ENCODE measurements at regions of chr19 and their contacts with region 1.

Region 1: DNA sequence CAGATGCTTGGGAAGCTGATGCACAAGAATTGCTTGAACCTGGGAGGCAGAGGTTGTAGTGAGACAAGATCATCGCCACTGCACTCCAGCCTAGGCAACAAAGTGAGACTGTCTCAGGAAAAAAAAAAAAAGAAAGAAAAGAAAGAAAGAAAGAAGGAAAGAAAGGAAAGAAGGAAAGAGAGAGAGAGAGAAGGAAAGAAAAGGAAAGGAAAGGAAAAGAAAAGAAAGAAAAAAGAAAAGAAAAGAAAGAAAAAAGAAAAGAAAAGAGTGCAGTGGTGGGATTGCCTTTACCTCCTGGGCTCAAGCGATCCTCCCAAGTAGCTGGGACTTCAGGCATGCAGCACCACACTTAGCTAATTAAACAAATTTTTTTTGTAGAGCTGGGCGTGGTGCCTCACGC is 12.9 kb downstream of the OLFM2 start:
- DNase-seq: no peak
- H3K4me3 ChIP-seq: no peak overlapping the region
- H3K27ac ChIP-seq: no peak overlapping the region
- H3K4me1 ChIP-seq: no peaks in the 10 kb centered on the region
- H3K27me3 ChIP-seq: no peaks in the 10 kb centered on the region
- CTCF ChIP-seq: no peak

Region 2: GRCh38 chr19:10061717-10062310 is 138.4 kb after region 1 on chr19:
- intact Hi-C with region 1: no loop called
- DNase-seq: peak in 2 of 5 donors; percentile 4 to 27
- H3K4me3 ChIP-seq: no peak overlapping the region
- H3K27ac ChIP-seq: no peak overlapping the region
- H3K4me1 ChIP-seq: no peaks in the 10 kb centered on the region
- H3K27me3 ChIP-seq: no peaks in the 10 kb centered on the region
- CTCF ChIP-seq: no peak

Region 3: DNA sequence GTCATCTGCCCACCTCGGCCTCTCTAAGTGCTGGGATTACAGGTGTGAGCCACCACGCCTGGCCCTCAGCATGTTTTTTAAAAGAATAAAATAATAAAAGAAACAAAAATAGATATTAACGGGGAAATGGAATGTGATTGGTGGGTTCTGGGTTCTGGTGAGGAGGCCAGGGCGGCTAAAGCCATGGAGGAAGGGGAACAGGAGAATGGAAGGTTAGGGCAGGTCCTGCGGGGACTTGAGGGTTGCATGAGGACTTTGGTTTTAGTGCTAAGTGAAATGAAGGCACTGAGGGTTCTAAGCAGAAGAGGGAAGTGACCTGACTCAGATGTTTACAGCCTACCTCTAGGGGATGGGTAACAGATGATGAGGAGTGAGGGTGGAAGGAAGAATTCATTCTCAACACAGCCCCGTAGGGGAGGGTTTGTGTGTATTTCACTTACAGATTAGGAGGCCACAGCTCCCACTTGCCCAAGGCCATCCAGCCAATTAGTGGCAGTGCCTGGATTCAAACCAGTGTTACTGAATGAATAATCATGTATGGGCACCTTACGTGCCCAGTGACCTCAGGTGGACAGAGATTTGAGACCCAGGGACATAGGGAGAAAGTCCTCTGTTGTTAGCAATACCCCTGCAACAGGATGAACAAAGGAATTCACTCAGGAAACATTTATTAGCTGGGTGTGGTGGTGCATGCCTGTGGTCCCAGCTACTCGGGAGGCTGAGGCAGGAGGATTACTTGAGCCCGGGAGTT is 321.9 kb after region 1 on chr19:
- intact Hi-C with region 1: loop called (anchors 10 kb)
- DNase-seq: no peak
- H3K4me3 ChIP-seq: no peak overlapping the region
- H3K27ac ChIP-seq: no peak overlapping the region
- H3K4me1 ChIP-seq: no peaks in the 10 kb centered on the region
- H3K27me3 ChIP-seq: no peaks in the 10 kb centered on the region
- CTCF ChIP-seq: no peak

Measured in kidney (tissue), 22 donors.